AG04449 (cell line): ENCODE measurements at regions of chr11 and their contacts with region 1.

Region 1: GRCh38 chr11:72609045-72609444 is 65.2 kb downstream of the PDE2A start:
- DNase-seq: no peak
- H3K4me3 ChIP-seq: no peak overlapping the region
- CTCF ChIP-seq: peak; percentile 25

Region 2: DNA sequence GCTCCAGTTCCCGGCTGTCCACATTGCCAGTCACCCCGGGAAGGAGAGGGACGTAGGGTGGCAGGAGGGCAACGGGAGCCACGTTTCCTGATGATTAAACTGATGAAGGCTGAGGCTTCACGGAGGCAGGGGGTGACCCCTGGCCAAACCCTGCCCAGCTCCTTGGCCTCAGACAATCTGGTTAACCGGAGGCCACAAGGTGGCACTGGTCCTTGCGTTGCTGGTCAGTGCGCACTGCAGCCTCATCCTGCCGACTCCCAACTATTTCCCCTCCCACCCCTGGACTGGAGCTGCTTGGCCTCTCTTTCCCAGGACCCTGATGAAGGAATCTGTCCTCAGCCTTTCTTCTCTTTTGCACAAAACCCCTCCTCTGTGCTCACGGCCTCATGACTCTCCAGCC is 10.1 kb before region 1 on chr11:
- CTCF ChIA-PET with region 1: interaction called, 18 read pairs
- POLR2A ChIA-PET with region 1: no interaction called
- DNase-seq: no peak
- H3K4me3 ChIP-seq: no peak overlapping the region
- CTCF ChIP-seq: peak; percentile 47

Region 3: GRCh38 chr11:72621008-72621610 is 12.1 kb after region 1 on chr11:
- CTCF ChIA-PET with region 1: interaction called, 25 read pairs
- POLR2A ChIA-PET with region 1: no interaction called
- DNase-seq: no peak
- H3K4me3 ChIP-seq: no peak overlapping the region
- CTCF ChIP-seq: no peak

Region 4: GRCh38 chr11:72793425-72794367 is 184.7 kb after region 1 on chr11 and contains the start of gene STARD10:
- CTCF ChIA-PET with region 1: no interaction called
- POLR2A ChIA-PET with region 1: no interaction called
- DNase-seq: no peak
- H3K4me3 ChIP-seq: peak within 1 kb of the TSS; percentile 71
- CTCF ChIP-seq: peak; percentile 92